Heart left ventricle (tissue), 16 donors: ENCODE measurements at regions of chr5 and their contacts with region 1.

Region 1: DNA sequence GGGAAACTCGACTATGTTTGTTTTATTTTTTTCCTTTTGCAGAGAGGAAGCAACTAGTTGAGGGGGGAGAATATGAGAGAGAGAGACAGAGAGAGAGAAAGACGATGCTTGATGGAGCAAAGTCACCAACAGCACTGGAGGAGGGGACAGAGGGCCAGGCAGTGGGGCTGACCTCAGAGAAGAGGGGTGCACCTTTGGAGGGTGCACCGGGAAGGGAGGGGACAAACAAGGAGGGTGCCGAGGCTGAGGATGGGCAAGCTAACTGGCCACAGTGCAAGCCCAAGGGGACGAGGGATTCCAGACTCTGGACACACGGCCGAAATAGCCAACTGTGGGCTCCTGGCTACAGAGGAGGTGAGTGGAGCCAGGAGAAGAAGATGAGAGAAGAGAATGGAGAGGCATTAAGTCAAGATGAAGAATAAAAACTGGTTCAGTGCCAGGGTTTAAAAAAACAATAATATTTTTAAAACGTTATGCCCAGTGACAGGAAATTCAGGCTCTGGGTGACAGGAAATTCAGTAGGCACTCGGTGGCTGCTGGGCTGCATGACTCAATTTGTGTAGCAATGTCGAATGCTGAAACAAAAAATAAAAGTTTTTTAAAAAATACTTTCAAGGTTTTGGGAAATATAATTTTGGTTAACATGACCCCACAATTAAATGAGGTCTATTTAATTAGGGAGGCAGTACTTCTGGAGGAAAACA is 13.3 kb upstream of the GLRX start:
- DNase-seq: no peak
- ATAC-seq: peak in 3 of 4 donors; percentile 1 to 18 (median 18)
- H3K4me3 ChIP-seq: peak overlapping the region in 9 of 12 donors; percentile 59 to 74 (median 65)
- H3K27ac ChIP-seq: peak overlapping the region; percentile 24 to 98 (median 88)
- H3K4me1 ChIP-seq: peaks cover 0 to 62% (median 18%) of the 10 kb centered on the region in 12 donors
- H3K27me3 ChIP-seq: no peaks in the 10 kb centered on the region
- CTCF ChIP-seq: no peak
- POLR2A ChIP-seq: no peak

Region 2: DNA sequence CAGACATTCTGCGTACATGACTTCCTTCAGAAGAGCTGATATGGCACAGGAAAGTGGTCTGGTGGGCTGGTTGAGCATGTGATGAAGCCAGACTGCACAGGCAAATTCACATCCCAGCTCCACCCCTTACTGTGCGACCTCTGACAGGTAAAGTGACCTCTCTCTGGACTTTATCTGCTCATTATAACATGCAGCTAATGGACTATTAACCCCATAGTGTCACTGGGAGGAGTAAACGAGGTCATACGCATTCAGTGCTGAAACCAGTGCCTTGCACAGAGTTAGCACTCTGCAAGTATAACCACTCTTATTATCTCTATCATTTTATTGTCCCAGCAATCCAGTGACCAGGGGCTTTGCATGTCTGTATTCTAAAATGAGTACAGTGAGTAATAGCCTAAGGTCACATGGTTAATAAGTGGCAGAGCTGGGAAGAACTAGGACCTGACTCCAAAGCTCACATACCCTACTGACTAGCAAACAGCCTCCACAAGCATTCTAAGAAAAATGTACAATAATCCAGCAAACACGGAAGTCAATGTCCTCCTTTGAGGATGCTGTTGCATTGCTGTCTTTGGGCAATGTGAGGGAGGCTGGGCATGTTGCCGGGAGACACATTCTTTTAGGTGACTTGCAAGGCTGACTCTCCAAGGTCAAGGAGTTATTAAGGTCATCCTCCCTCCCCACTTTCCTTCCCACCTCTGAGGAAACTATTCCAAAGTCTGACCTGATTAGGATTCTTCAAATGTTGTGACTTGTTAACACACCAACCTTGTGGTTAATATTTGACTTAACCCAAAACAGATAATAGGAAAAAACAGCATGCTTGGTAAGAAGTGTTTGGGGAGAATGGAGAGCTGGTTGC is 32.3 kb before region 1 on chr5:
- intact Hi-C with region 1: loop called in 1 of 10 experiments (anchors 5 kb)
- DNase-seq: no peak
- ATAC-seq: peak; percentile 84 to 89 (median 87)
- H3K4me3 ChIP-seq: no peak overlapping the region
- H3K27ac ChIP-seq: peak overlapping the region; percentile 46 to 91 (median 70)
- H3K4me1 ChIP-seq: peaks cover 0 to 42% (median 25%) of the 10 kb centered on the region in 12 donors
- H3K27me3 ChIP-seq: no peaks in the 10 kb centered on the region
- CTCF ChIP-seq: no peak
- POLR2A ChIP-seq: no peak

Region 3: DNA sequence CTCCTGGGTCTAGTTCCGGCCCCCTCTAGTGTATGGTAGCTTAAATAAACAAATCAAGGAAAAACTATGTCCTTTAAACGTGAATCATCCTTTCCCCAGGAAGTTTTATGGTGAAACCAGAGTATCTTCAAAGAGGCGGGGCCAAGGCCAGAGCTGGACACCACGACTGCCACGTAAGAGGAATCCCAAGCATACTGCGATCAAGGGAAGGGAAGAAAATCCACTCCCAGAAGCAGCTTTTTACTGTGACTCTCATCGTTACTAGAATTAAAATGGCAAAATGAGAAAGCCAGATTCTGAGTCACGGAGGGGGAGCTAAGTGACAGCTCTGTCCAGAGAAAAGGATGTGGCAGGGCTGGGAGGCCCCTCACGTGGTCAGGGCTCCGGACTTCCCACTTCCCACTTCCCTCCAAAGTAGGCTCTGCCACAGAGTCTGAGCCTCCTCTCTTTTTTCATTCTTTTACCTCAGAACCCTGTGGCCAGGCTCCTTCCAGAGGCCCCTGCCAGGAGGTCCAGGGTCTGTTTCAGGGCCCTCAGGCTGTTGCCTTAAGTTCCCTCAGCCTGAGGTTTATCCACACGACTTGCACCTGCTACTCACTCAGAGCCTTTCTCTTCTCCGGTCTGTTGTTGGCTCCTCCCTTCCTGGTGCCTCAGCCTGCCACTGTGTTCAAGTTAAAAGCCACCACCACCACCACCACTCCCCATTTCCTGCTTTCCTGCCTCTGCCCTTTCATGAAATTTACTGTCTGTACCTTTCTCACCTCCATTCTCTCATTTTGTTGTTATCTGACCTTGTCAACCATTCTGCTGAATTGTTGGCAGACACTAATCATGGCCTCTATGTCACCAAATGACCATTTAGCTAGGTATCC is 11.9 kb before region 1 on chr5:
- intact Hi-C with region 1: loop called in 1 of 10 experiments (anchors 1 kb)
- DNase-seq: peak; percentile 66 to 74 (median 72)
- ATAC-seq: peak; percentile 17 to 77 (median 62)
- H3K4me3 ChIP-seq: peak overlapping the region in 9 of 12 donors; percentile 69 to 93 (median 84)
- H3K27ac ChIP-seq: peak overlapping the region; percentile 31 to 95 (median 88)
- H3K4me1 ChIP-seq: peaks cover 5 to 77% (median 45%) of the 10 kb centered on the region in 12 donors
- H3K27me3 ChIP-seq: no peaks in the 10 kb centered on the region
- CTCF ChIP-seq: peak in 1 of 12 donors; percentile 6
- POLR2A ChIP-seq: no peak

Region 4: DNA sequence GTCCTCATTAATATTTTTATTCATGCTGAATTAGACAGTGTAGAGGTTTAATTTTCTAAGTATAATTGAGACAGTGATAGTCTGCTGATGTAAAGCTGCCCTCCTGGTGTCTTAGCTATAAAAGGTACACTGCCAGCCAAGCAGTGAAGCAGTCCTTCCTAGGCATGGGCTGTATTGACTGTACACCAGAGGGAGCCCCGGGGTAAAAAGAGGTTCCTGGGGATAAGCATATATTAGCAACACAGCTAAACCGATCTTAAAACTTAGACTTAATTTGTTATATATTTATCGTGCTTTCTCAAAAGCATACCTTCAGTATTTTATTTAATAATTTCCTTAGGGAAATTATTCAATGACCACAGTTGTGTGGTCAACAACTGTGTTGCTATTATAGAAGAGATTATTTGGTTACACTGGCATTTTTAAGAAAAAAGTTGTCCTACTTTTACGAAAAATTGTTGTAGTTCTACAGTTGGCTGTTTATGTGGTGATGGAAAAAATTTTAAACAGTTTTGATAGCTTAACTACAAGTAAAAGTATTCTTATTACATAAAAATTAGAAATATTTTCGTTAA is 57.0 kb after region 1 on chr5:
- intact Hi-C with region 1: no loop called
- DNase-seq: no peak
- ATAC-seq: peak in 2 of 4 donors; percentile 42 to 59
- H3K4me3 ChIP-seq: no peak overlapping the region
- H3K27ac ChIP-seq: no peak overlapping the region
- H3K4me1 ChIP-seq: peaks cover 0 to 22% (median 3%) of the 10 kb centered on the region in 12 donors
- H3K27me3 ChIP-seq: no peaks in the 10 kb centered on the region
- CTCF ChIP-seq: peak in 11 of 12 donors; percentile 18 to 52 (median 35)
- POLR2A ChIP-seq: no peak